WTC11 (cell line): ENCODE measurements at regions of chr15 and their contacts with region 1.

Region 1: DNA sequence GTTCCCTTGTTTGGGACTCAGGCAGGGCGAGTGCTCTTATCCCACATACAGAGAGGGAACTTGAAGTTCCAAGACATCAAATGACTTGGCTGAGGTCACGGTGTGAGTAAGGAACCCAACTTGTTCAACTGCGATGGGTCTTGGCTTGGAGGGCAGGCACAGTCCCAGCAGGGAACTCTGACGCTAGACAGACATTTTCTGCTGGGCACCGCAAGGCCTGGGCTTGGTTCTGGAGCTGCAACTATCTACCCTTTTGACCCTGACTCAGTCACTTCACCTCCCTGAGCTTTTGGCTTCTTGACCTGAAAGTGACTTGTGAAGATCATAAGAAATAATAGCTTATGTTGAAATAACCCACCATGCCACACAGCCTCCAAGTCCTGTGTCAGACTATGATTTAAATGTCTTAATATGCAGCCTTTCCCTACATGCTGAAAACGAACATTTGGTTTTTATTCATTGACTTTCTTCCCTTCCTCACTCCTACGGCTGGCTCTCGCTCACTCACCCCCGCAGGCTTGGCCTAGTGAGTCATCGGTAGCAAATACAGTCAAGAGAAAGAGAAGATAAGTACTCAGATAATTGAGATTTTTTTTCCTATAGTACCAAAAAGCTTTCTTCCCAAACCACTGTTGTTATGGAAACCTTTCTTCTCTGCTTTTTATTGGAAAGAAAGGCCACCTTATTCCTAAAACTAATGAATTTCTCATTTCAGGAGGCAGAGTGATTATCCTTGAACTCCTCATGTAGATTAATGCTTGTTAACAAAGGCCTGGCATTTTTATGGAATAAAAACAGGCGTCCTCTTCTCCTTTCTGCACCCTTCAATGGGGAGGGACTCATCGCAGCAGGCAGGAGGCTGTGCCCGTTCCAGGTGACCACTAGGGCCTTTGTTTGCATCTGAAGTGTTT is 178.4 kb downstream of the ATP10A start:
- DNase-seq: no peak
- ATAC-seq: no peak
- H3K4me3 Mint-ChIP-seq: no peak overlapping the region
- H3K27ac Mint-ChIP-seq: no peak overlapping the region
- H3K4me1 Mint-ChIP-seq: peaks cover 19% of the 10 kb centered on the region
- H3K27me3 Mint-ChIP-seq: peaks cover 6% of the 10 kb centered on the region
- CTCF ChIP-seq: no peak

Region 2: DNA sequence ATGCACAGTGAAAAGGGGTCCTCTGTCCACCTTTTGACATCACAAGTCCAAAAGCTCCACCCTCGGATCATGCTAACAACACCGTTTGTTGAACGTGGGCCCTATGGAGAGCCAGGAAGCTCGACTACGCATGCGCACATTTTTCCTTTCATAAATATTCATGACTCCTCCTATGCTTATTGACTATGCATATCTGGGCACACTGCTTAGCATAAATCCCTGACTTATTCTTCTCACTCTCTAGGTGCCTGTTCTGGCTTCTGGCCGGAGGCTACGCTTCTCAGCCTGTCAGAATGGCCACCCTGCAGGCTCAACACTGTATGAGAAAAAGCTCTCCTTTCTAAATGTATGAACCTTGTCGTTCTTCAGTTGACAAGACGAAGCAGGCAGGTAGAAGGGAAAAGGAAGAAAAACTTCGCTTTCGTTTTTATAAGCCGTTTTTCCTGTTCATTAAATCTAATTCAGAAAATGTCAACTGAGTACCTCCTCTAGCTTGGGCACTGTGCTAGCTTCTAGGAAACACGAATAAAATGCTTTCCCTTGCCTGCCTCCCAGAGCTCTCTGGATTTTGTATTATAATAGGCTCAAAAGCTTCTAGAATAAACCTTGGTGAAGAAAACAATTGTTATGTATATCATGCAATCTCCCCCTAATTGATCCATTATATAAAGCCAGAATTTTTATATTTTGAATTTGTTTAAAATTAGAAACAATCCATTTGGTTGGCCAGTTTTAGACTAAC is 29.4 kb before region 1 on chr15:
- CTCF ChIA-PET with region 1: interaction called, 13 read pairs
- POLR2A ChIA-PET with region 1: no interaction called
- DNase-seq: no peak
- ATAC-seq: peak; percentile 57
- H3K4me3 Mint-ChIP-seq: no peak overlapping the region; the same call in 1 of the 2 replicates
- H3K27ac Mint-ChIP-seq: peak overlapping the region; percentile 67; the same call in 1 of the 2 replicates
- H3K4me1 Mint-ChIP-seq: peaks cover 41% of the 10 kb centered on the region
- H3K27me3 Mint-ChIP-seq: peaks cover 63% of the 10 kb centered on the region
- CTCF ChIP-seq: no peak

Region 3: GRCh38 chr15:25797936-25798901 is 113.4 kb after region 1 on chr15:
- CTCF ChIA-PET with region 1: no interaction called
- POLR2A ChIA-PET with region 1: no interaction called
- DNase-seq: no peak
- ATAC-seq: no peak
- H3K4me3 Mint-ChIP-seq: no peak overlapping the region
- H3K27ac Mint-ChIP-seq: no peak overlapping the region
- H3K4me1 Mint-ChIP-seq: peaks cover 38% of the 10 kb centered on the region
- H3K27me3 Mint-ChIP-seq: no peaks in the 10 kb centered on the region; the same call in 1 of the 2 replicates
- CTCF ChIP-seq: no peak